ENCODE measurements at regions of chr9 and their contacts with region 1.

Region 1: GRCh38 chr9:130331573-130331972 is 66.0 kb downstream of the HMCN2 start:
- DNase-seq: peak in 2 of 3 donors; percentile 47 to 66
- ATAC-seq: peak; percentile 42
- H3K4me3 ChIP-seq: no peak overlapping the region
- H3K4me1 ChIP-seq: peaks cover 2% of the 10 kb centered on the region
- CTCF ChIP-seq: no peak

Region 2: DNA sequence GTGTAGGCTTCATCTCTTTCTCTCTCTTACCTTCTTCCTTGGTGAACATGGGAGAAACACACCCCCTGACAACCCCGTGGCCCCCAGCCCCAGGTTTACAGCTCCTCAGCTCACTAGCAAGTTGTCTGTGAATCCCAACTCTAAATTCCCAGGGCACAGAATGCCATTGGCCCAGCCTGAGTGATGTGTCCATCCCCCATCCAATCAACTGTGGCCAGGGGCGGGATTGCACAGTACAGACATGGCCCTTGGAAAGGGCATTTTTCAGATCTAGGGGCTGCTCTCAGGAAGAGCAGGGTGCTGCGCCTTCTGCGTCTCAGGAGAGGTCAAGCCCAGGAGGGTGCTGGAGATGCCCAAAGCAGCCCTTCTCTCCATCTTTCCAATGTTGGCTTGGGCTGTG is 65.0 kb after region 1 on chr9:
- intact Hi-C with region 1: loop called in 1 of 2 experiments (anchors 10 kb)
- DNase-seq: no peak
- ATAC-seq: no peak
- H3K4me3 ChIP-seq: no peak overlapping the region
- H3K4me1 ChIP-seq: no peaks in the 10 kb centered on the region
- CTCF ChIP-seq: no peak